Natural killer cell (primary cell): ENCODE measurements at regions of chr5 and their contacts with region 1.

Region 1: DNA sequence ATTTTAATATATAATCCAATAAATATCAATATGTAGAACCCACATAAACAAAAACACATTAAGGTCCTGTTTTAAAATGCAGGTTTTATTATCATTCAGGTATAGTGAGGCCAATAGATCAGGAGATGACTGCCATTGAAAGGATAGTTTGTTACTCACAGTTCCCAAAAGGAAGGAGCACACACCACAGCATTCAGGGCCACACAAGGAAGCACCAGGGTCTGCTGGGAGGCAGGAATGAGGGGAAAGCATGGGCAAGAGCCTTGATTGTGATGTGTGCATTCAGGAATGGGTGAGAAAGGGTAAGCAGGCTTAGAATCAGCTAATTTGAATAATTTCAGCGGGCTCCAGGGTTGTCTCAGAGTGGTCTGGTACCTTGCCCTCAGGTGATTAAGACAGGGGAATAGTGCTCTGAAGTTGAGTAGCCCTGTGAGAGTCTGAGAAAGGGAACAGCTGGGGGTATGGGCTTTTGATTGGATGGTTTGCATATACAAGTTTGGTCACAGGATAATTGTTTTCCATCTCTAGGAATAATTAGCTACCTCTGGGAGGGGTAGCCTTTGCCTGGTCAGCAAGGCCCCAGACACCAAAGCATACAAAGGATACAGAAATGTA is 19.8 kb upstream of the OTULIN start:
- DNase-seq: no peak
- ATAC-seq: no peak
- H3K4me3 ChIP-seq: no peak overlapping the region
- H3K4me3 Mint-ChIP-seq: no peak overlapping the region
- H3K27ac ChIP-seq: no peak overlapping the region
- H3K27ac Mint-ChIP-seq: no peak overlapping the region
- H3K4me1 ChIP-seq: no peaks in the 10 kb centered on the region
- H3K4me1 Mint-ChIP-seq: peaks cover 0 to 5% of the 10 kb centered on the region in 2 donors
- H3K27me3 ChIP-seq: no peaks in the 10 kb centered on the region
- H3K27me3 Mint-ChIP-seq: peaks cover 16 to 19% of the 10 kb centered on the region in 2 donors
- CTCF ChIP-seq: no peak

Region 2: GRCh38 chr5:13987843-13988464 is 656.8 kb before region 1 on chr5:
- intact Hi-C with region 1: loop called (anchors 1 kb)
- DNase-seq: peak in 1 of 2 donors; percentile 19
- ATAC-seq: peak in 2 of 3 donors; percentile 38 to 46
- H3K4me3 ChIP-seq: no peak overlapping the region
- H3K4me3 Mint-ChIP-seq: no peak overlapping the region
- H3K27ac ChIP-seq: no peak overlapping the region
- H3K27ac Mint-ChIP-seq: no peak overlapping the region
- H3K4me1 ChIP-seq: no peaks in the 10 kb centered on the region
- H3K4me1 Mint-ChIP-seq: no peaks in the 10 kb centered on the region
- H3K27me3 ChIP-seq: no peaks in the 10 kb centered on the region
- H3K27me3 Mint-ChIP-seq: peaks cover 0 to 6% of the 10 kb centered on the region in 2 donors
- CTCF ChIP-seq: peak; percentile 58

Region 3: DNA sequence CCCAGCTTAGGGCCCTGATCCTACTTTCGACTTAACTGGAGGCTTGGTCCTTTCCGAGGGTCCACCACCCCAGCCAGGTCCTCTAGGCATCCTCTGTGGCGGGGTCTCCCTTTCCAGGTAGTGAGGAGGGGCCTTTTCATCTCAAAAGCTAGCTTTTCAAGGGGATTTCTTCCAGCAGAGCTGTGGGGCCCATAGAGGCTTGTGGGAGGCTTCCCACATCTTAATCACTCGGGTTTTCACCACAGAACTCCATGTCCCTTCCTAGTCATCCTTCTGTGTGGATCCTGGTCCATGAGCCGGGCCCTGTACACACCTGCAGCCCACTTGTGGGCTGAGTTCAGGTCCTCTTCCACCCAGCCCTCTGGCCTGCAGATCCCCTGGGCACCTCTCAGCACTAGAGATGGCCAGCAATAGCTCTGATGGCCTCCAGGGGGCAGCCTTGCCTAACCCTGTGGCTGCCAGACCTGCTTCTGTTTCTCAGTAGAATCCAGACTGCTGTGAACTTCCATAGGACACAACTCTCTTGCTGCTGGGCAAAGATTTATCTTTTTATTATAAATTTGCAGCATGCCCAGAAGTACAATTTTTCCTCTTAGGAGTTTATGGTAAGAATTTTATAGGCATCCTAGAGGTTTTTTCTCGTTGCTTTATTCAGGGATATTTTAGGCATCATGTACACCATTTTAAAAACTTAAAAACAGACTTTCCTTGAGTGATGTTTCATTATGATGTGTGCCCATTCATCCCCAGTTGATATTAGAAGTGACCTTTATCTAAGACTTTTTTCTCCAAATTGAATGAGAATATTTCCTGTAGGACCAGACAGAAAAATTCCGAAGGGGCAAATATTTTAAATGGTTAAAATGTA is 292.7 kb before region 1 on chr5:
- intact Hi-C with region 1: loop called (anchors 1 kb)
- DNase-seq: peak; percentile 57 to 82
- ATAC-seq: peak; percentile 90 to 99 (median 99)
- H3K4me3 ChIP-seq: no peak overlapping the region
- H3K4me3 Mint-ChIP-seq: no peak overlapping the region
- H3K27ac ChIP-seq: no peak overlapping the region
- H3K27ac Mint-ChIP-seq: no peak overlapping the region
- H3K4me1 ChIP-seq: peaks cover 10% of the 10 kb centered on the region
- H3K4me1 Mint-ChIP-seq: peaks cover 10 to 15% of the 10 kb centered on the region in 2 donors
- H3K27me3 ChIP-seq: no peaks in the 10 kb centered on the region
- H3K27me3 Mint-ChIP-seq: no peaks in the 10 kb centered on the region
- CTCF ChIP-seq: peak; percentile 90

Region 4: GRCh38 chr5:14364576-14365472 is 279.9 kb before region 1 on chr5:
- intact Hi-C with region 1: loop called (anchors 1 kb)
- DNase-seq: peak in 1 of 2 donors; percentile 38
- ATAC-seq: no peak
- H3K4me3 ChIP-seq: no peak overlapping the region
- H3K4me3 Mint-ChIP-seq: peak overlapping the region; percentile 69
- H3K27ac ChIP-seq: no peak overlapping the region
- H3K27ac Mint-ChIP-seq: peak overlapping the region; percentile 56 to 68
- H3K4me1 ChIP-seq: peaks cover 46% of the 10 kb centered on the region
- H3K4me1 Mint-ChIP-seq: peaks cover 40 to 48% of the 10 kb centered on the region in 2 donors
- H3K27me3 ChIP-seq: no peaks in the 10 kb centered on the region
- H3K27me3 Mint-ChIP-seq: no peaks in the 10 kb centered on the region
- CTCF ChIP-seq: no peak

Region 5: DNA sequence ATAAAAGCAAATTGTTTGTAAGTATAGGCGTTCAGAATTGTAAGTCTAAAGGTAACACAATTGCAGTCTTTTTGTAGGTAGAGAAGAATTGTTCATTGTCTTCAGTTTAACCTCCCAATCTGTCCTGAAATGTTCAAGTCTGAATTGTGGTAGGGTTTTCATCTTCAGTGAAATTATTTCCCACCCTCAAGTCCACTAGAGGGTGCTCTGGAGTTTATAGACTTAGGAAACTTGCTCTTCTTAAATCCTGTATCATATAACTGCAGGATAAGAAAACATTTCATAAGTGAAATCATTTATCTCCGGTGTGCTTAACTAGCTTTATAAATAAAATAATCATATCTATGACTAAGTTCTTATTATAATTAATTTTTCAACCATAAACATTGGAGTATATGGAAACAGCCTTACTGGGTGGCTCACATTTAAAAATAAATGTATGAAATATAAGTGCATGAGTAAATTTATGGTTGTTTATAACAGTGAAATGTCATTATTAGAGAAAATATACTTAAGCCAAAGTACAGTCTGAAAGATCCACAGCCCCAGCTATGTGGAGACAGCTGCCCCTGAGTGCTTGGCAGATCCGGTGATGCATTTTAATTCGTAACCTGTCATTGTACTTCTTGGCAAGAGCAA is 245.6 kb before region 1 on chr5:
- intact Hi-C with region 1: loop called (anchors 1 kb)
- DNase-seq: peak in 1 of 2 donors; percentile 75
- ATAC-seq: peak in 2 of 3 donors; percentile 31 to 50
- H3K4me3 ChIP-seq: no peak overlapping the region
- H3K4me3 Mint-ChIP-seq: no peak overlapping the region
- H3K27ac ChIP-seq: no peak overlapping the region
- H3K27ac Mint-ChIP-seq: no peak overlapping the region
- H3K4me1 ChIP-seq: no peaks in the 10 kb centered on the region
- H3K4me1 Mint-ChIP-seq: peaks cover 3 to 14% of the 10 kb centered on the region in 2 donors
- H3K27me3 ChIP-seq: no peaks in the 10 kb centered on the region
- H3K27me3 Mint-ChIP-seq: no peaks in the 10 kb centered on the region
- CTCF ChIP-seq: peak; percentile 60

Region 6: DNA sequence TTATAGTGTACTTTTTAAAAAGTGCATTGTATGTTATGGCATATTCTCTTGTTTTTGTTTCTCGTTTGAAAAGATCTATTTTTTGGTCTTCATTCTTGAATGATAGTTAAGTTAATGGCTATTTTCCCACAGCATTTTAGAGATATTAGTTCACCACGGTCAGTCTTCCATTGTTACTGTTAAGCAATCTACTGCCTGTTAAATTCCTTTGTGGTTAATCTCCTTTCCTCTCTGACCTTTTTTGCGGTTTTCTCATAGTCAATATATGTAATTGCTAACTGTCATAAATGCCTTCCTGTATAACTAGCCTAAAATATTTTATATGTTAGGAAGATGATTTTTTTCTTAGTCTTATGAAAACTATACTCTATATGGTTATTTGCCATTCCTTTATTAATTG is 604.4 kb after region 1 on chr5:
- intact Hi-C with region 1: no loop called
- DNase-seq: no peak
- ATAC-seq: no peak
- H3K4me3 ChIP-seq: no peak overlapping the region
- H3K4me3 Mint-ChIP-seq: no peak overlapping the region
- H3K27ac ChIP-seq: no peak overlapping the region
- H3K27ac Mint-ChIP-seq: no peak overlapping the region
- H3K4me1 ChIP-seq: no peaks in the 10 kb centered on the region
- H3K4me1 Mint-ChIP-seq: no peaks in the 10 kb centered on the region
- H3K27me3 ChIP-seq: no peaks in the 10 kb centered on the region
- H3K27me3 Mint-ChIP-seq: no peaks in the 10 kb centered on the region
- CTCF ChIP-seq: no peak